ENCODE measurements at regions of chr5 and their contacts with region 1.

Region 1: DNA sequence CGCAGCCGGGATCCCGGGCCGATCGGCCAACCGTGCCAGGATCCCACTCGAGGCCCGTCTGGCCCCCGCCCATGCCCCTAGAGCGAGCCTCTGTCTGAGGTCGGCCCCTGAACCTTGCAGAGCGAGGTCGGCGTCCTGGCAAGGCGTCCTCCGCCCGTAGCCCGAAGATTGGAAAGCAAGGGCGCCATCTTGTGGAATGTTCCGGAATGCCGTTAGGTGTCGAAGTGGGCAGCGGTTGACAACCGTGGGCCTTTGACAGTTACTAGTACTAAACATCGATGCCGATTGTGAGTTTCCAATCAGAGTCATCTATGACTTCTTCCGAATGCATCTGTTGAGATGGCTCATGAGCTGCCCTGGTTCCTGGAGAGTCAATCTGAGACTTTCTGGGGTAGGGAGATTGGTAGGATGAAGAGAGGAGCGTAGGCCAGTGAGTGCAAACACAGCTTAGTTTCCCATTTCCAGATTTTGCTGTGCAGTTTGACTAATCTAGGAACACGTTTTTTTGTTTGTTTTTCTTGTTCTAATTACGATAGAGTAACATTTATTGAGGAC is 923 bp upstream of the PLK2 start:
- DNase-seq: peak; percentile 79 to 94 (median 89)
- ATAC-seq: peak; percentile 67
- H3K4me3 ChIP-seq: peak overlapping the region; percentile 66 to 81
- H3K4me3 Mint-ChIP-seq: peak overlapping the region; percentile 90
- H3K27ac ChIP-seq: peak overlapping the region; percentile 79 to 87
- H3K27ac Mint-ChIP-seq: peak overlapping the region; percentile 83
- H3K4me1 ChIP-seq: peaks cover 7% of the 10 kb centered on the region
- H3K4me1 Mint-ChIP-seq: peaks cover 13% of the 10 kb centered on the region
- H3K27me3 ChIP-seq: peaks cover 4 to 8% of the 10 kb centered on the region in 2 experiments
- H3K27me3 Mint-ChIP-seq: peaks cover 11% of the 10 kb centered on the region
- CTCF ChIP-seq: peak; percentile 79

Region 2: DNA sequence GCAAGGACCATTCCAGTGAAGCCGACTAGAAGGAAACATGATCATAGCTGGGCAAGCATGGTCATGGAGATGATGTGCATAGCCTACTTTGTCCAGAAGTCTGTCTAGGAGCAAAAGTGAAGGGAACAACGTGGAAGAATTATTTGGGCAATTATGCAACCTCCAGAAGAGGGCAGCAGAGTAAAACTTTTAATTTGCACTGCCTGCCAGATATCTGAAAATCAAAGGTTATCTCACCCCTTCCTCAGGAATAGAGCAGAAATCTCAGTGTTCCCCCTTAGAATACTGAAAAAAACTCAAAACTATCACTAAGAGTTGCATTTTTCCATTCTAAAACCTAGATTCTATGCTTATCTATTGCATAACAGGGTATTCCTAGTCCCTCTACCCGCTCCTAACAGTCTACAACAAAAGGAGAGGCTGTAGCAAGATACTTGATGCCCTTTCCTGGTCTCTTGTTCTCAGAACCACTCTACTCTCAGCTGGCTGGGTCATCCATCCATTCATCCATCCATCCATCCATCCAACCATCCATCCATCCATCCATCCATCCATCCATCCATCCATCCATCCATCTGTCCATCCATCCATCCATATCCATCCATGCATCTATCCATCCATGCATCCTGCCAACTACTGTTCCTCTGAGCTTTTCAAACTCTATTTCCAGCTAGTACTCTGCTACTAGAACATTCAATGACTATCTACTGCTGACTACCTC is 1559.8 kb before region 1 on chr5:
- CTCF ChIA-PET with region 1: no interaction called
- POLR2A ChIA-PET with region 1: no interaction called
- intact Hi-C with region 1: loop called (anchors 1 to 2 kb)
- DNase-seq: peak in 7 of 9 experiments; percentile 12 to 73 (median 38)
- ATAC-seq: peak; percentile 65
- H3K4me3 ChIP-seq: no peak overlapping the region
- H3K4me3 Mint-ChIP-seq: no peak overlapping the region
- H3K27ac ChIP-seq: no peak overlapping the region
- H3K27ac Mint-ChIP-seq: no peak overlapping the region
- H3K4me1 ChIP-seq: no peaks in the 10 kb centered on the region
- H3K4me1 Mint-ChIP-seq: no peaks in the 10 kb centered on the region
- H3K27me3 ChIP-seq: no peaks in the 10 kb centered on the region
- H3K27me3 Mint-ChIP-seq: no peaks in the 10 kb centered on the region
- CTCF ChIP-seq: peak; percentile 84

Region 3: GRCh38 chr5:56951946-56952691 is 1508.7 kb before region 1 on chr5 and contains the start of gene MIER3:
- CTCF ChIA-PET with region 1: no interaction called
- POLR2A ChIA-PET with region 1: no interaction called
- intact Hi-C with region 1: loop called in 1 of 2 experiments (anchors 2 kb)
- DNase-seq: peak; percentile 50 to 86 (median 78)
- ATAC-seq: peak; percentile 92
- H3K4me3 ChIP-seq: peak within 1 kb of the TSS; percentile 66 to 69
- H3K4me3 Mint-ChIP-seq: peak within 1 kb of the TSS; percentile 95
- H3K27ac ChIP-seq: peak within 1 kb of the TSS; percentile 37 to 40
- H3K27ac Mint-ChIP-seq: peak within 1 kb of the TSS; percentile 87
- H3K4me1 ChIP-seq: peaks cover 16% of the 10 kb centered on the region
- H3K4me1 Mint-ChIP-seq: peaks cover 23% of the 10 kb centered on the region
- H3K27me3 ChIP-seq: no peaks in the 10 kb centered on the region
- H3K27me3 Mint-ChIP-seq: peaks cover 14% of the 10 kb centered on the region
- CTCF ChIP-seq: no peak
- total RNA-seq, gene MIER3: 29.3 to 39.2 TPM

Region 4: GRCh38 chr5:57298295-57298984 is 1162.4 kb before region 1 on chr5:
- CTCF ChIA-PET with region 1: interaction called, 68 read pairs
- POLR2A ChIA-PET with region 1: interaction called, 5 read pairs
- intact Hi-C with region 1: loop called (anchors 1 kb)
- DNase-seq: peak; percentile 67 to 91 (median 84)
- ATAC-seq: peak; percentile 87
- H3K4me3 ChIP-seq: peak overlapping the region; percentile 7 to 39
- H3K4me3 Mint-ChIP-seq: peak overlapping the region; percentile 77
- H3K27ac ChIP-seq: no peak overlapping the region
- H3K27ac Mint-ChIP-seq: peak overlapping the region; percentile 62
- H3K4me1 ChIP-seq: peaks cover 6% of the 10 kb centered on the region
- H3K4me1 Mint-ChIP-seq: peaks cover 13% of the 10 kb centered on the region
- H3K27me3 ChIP-seq: no peaks in the 10 kb centered on the region
- H3K27me3 Mint-ChIP-seq: no peaks in the 10 kb centered on the region
- CTCF ChIP-seq: peak; percentile 64

Region 5: GRCh38 chr5:57650360-57651069 is 810.3 kb before region 1 on chr5:
- CTCF ChIA-PET with region 1: interaction called, 19 read pairs
- POLR2A ChIA-PET with region 1: no interaction called
- intact Hi-C with region 1: loop called (anchors 2 kb)
- DNase-seq: peak in 2 of 9 experiments; percentile 13 to 35
- ATAC-seq: no peak
- H3K4me3 ChIP-seq: no peak overlapping the region
- H3K4me3 Mint-ChIP-seq: no peak overlapping the region
- H3K27ac ChIP-seq: no peak overlapping the region
- H3K27ac Mint-ChIP-seq: no peak overlapping the region
- H3K4me1 ChIP-seq: no peaks in the 10 kb centered on the region
- H3K4me1 Mint-ChIP-seq: no peaks in the 10 kb centered on the region
- H3K27me3 ChIP-seq: no peaks in the 10 kb centered on the region
- H3K27me3 Mint-ChIP-seq: peaks cover 3% of the 10 kb centered on the region
- CTCF ChIP-seq: peak; percentile 46

Region 6: GRCh38 chr5:58165152-58165551 is 295.7 kb before region 1 on chr5:
- CTCF ChIA-PET with region 1: no interaction called
- POLR2A ChIA-PET with region 1: no interaction called
- intact Hi-C with region 1: no loop called
- DNase-seq: no peak
- ATAC-seq: no peak
- H3K4me3 ChIP-seq: no peak overlapping the region
- H3K4me3 Mint-ChIP-seq: no peak overlapping the region
- H3K27ac ChIP-seq: no peak overlapping the region
- H3K27ac Mint-ChIP-seq: no peak overlapping the region
- H3K4me1 ChIP-seq: no peaks in the 10 kb centered on the region
- H3K4me1 Mint-ChIP-seq: no peaks in the 10 kb centered on the region
- H3K27me3 ChIP-seq: no peaks in the 10 kb centered on the region
- H3K27me3 Mint-ChIP-seq: no peaks in the 10 kb centered on the region
- CTCF ChIP-seq: no peak

Region 7: DNA sequence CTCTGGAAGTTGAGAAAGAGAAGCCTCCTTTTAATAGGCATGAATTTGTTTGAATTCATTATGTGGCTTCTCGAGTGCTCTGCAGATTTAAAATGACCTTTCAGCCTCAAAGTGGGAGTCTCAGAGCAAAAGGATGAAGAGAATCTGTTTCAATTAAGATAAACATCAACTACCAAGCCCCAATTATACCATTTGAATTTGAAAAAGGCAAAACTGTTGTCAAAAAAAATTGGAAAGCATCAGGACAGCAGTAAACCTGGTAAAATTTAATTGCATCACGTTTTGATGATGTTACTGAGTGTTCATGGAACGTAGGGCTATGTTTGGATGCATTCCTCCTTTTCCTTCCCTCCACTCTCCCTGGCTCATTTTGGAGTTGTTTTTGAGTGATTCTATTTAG is 795.5 kb after region 1 on chr5:
- CTCF ChIA-PET with region 1: no interaction called
- POLR2A ChIA-PET with region 1: no interaction called
- intact Hi-C with region 1: no loop called
- DNase-seq: no peak
- ATAC-seq: no peak
- H3K4me3 ChIP-seq: no peak overlapping the region
- H3K4me3 Mint-ChIP-seq: no peak overlapping the region
- H3K27ac ChIP-seq: no peak overlapping the region
- H3K27ac Mint-ChIP-seq: no peak overlapping the region
- H3K4me1 ChIP-seq: no peaks in the 10 kb centered on the region
- H3K4me1 Mint-ChIP-seq: no peaks in the 10 kb centered on the region
- H3K27me3 ChIP-seq: no peaks in the 10 kb centered on the region
- H3K27me3 Mint-ChIP-seq: peaks cover 6% of the 10 kb centered on the region
- CTCF ChIP-seq: no peak

Measured in CD8-positive, alpha-beta T cell (primary cell).